Activated CD8-positive, alpha-beta T cell treated with anti-CD3 and anti-CD28 coated beads, Interleukin-2, amount 10 ng/mL, durations not matched to agents 7 days and 5 days (primary cell): ENCODE measurements at regions of chr16 and their contacts with region 1.

Region 1: DNA sequence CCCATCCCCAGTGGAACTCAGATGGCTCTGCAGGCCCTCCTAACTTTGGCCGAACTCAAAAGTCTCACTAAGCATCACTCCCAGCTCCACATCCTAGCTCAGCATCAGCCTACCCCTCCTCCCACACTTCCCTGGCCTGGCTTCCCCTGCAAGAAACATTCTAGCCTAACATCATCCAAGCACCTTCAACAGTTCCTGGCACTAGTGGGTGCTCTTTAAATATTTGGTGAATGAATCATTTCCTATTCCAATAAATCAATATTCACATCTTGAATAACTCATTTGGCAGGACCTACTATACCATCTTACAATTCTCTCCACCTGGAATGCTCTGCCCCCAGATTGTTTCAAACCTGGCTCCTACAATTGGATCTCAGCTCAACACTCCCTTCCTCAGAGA is 11.0 kb upstream of the BBS2 start:
- DNase-seq: no peak
- ATAC-seq: no peak
- H3K4me3 Mint-ChIP-seq: no peak overlapping the region
- H3K27ac Mint-ChIP-seq: no peak overlapping the region
- H3K4me1 Mint-ChIP-seq: no peaks in the 10 kb centered on the region
- H3K27me3 Mint-ChIP-seq: peaks cover 40% of the 10 kb centered on the region

Region 2: GRCh38 chr16:56493126-56493525 is 37.7 kb before region 1 on chr16:
- CTCF ChIA-PET with region 1: no interaction called
- POLR2A ChIA-PET with region 1: no interaction called
- DNase-seq: no peak
- ATAC-seq: no peak
- H3K4me3 Mint-ChIP-seq: no peak overlapping the region
- H3K27ac Mint-ChIP-seq: no peak overlapping the region
- H3K4me1 Mint-ChIP-seq: no peaks in the 10 kb centered on the region
- H3K27me3 Mint-ChIP-seq: no peaks in the 10 kb centered on the region

Region 3: DNA sequence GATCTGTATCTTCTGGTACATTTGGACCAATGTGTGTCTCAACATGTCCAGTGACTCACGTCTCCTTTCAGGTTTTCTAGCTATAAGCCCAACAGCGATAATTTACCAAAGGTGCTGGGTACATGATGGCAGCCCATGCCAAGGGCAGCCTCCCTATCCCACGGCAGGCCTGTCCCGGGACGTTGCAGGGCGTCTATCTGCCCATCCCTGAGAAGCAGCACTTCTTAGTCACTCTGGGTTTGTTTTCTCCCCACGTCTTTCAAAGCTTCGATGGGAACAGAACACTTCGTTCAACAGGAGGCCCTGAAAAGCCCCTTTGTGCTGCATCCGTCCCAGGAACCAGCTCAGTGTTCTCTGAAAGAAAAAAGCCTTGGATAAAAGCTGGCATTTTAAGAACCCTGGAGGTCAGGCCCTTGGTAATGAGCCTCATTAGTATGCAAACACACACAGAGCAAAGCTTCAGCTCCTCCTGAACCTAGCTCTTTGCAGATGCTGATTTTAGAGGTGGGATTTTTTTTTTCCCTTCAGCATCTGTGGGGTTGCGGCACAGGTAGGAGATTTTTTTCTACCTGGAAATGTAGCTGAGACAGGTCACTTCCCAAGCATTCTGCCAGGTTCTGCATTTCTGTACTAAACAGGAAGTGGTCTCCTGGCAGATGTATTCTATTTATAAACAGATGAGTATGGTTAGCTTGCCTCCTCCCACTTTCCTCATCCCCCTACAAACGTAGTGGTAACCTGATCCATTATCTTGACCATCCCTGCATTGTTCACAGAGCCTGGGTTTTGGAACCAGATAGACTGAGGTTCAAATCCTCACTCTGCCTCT is 16.5 kb after region 1 on chr16:
- CTCF ChIA-PET with region 1: interaction called, 10 read pairs
- POLR2A ChIA-PET with region 1: no interaction called
- DNase-seq: no peak
- ATAC-seq: no peak
- H3K4me3 Mint-ChIP-seq: no peak overlapping the region
- H3K27ac Mint-ChIP-seq: peak overlapping the region; percentile 37
- H3K4me1 Mint-ChIP-seq: peaks cover 13% of the 10 kb centered on the region
- H3K27me3 Mint-ChIP-seq: peaks cover 6% of the 10 kb centered on the region